ENCODE measurements at regions of chr1 and their contacts with region 1.

Region 1: DNA sequence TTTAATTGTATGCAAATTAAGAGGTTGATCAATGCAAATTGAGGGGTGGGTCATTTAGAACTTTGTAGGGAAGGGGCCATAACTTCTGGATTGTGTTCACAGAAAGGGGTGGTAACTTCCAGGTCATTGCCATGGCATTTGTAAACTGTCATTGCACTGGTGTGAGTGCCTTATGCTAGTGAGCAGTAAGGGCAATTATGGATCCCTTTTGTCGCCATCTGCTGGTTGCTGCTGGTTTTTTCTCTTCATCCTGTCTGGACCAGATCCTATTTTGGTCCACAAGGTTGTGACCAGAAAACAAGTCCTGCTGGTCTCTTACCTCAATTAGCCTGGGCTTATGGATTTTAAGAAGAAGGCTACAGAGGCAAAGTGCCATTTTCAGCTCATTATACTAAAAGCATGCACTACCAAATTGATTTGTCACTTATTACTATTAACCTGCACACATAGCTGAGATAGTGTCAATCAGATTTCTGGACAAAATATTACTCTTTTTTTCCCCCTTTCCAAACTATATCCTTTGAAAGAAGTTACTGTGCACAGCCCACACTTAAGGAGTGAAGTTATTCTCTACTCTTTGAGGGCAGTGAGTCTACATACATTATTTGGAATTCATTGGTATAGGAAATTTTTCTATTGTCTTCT is 196.2 kb downstream of the ZC3H11B start:
- DNase-seq: peak; percentile 44 to 57
- H3K4me3 ChIP-seq: no peak overlapping the region
- H3K27ac ChIP-seq: no peak overlapping the region
- H3K4me1 ChIP-seq: no peaks in the 10 kb centered on the region
- H3K27me3 ChIP-seq: no peaks in the 10 kb centered on the region
- CTCF ChIP-seq: peak; percentile 71

Region 2: DNA sequence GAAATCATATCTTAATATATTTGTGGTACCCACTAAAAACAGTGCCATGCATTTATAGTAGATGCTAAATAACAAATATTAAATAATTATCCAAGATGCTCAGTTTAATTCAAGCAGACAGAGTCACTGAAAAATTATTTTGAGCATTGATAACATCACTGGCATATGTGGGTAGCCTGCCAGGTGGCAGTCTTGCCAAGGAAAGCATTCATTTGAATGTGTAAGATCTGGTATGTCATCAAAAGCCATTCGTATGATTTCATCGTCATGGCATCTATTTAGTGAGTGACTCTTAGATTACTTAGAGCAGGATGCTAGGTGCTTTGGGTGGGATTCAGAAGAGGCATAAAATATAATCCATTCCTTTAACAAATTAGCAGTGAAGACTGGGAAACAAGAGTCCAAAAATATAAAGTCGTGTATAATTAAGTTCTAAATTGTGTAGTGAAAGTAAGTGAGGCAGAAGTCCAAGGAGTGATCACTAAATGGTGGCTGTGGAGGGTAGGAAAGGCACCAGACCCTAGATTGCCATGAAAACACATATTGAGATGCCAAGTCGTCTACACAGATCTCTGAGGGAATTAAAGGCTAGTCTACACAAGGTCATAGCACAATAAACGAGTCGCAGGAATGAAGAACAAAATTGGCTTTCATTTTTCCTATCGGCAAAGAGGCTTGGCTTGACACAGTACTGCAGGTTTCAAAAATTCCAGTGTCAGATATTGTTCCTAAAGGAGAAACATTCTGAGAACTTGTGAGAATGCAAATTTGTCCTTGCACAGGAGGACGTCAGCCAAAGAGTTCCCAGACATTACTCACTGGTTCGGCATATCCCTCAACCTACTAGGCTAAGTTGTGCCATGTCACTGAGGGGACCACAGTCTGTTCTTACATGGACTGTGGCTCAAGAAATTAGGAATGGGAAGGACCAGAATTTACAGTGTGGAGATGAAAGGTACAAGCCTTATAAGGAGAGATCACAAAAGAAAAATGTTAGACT is 112.2 kb before region 1 on chr1:
- CTCF ChIA-PET with region 1: no interaction called
- POLR2A ChIA-PET with region 1: no interaction called
- intact Hi-C with region 1: loop called (anchors 1 kb)
- DNase-seq: peak; percentile 37 to 49
- H3K4me3 ChIP-seq: no peak overlapping the region
- H3K27ac ChIP-seq: no peak overlapping the region
- H3K4me1 ChIP-seq: no peaks in the 10 kb centered on the region
- H3K27me3 ChIP-seq: no peaks in the 10 kb centered on the region
- CTCF ChIP-seq: peak; percentile 47; the same call in 1 of the 2 replicates

Measured in PC-9 (cell line).